OCI-LY7 (cell line): ENCODE measurements at regions of chr7 and their contacts with region 1.

Region 1: GRCh38 chr7:100691676-100692577 is 2.1 kb downstream of the GIGYF1 start:
- DNase-seq: peak; percentile 84
- H3K4me3 ChIP-seq: peak overlapping the region; percentile 95
- H3K27ac ChIP-seq: peak overlapping the region; percentile 42
- H3K4me1 ChIP-seq: peaks cover 42% of the 10 kb centered on the region
- CTCF ChIP-seq: peak; percentile 93

Region 2: DNA sequence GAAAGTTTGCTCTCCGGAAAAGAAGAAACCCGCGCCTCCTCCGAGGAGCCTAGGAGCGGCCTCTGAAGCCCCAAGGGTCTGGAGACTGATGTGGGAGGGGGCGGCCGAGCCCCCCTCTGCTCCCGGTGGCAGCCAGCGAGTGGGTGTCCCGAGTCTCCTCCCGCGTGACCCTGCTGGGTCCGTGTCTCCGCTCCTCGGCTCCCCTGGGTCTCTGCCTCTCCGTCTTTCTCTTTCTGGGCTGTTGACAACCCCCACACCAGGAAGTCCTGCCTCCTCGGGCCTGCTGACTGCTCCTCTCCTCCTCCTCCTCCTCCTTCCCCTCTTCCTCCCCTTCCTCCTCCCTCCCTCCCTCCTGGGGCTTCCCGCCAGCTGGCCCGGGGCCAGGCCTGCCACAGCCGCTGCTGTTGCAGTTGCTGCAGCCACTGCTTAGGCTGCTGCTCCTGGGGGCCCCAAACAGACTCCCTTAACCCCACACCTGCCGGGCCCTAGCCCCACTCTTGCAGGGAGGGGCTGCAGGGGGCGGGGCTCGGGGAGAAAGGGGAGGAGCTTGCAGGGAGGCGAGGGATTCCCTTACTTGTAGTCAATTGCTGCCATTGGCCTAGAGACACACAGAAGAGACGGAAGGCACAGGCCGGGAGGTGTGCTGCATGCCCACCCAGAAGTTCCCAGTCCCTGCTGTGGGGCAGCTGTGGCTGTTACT is 212.8 kb before region 1 on chr7 and contains the start of gene TSC22D4:
- CTCF ChIA-PET with region 1: no interaction called
- POLR2A ChIA-PET with region 1: interaction called, 4 read pairs
- intact Hi-C with region 1: loop called (anchors 5 kb)
- DNase-seq: peak; percentile 97
- H3K4me3 ChIP-seq: peak within 1 kb of the TSS; percentile 86
- H3K27ac ChIP-seq: peak within 1 kb of the TSS; percentile 75
- H3K4me1 ChIP-seq: peaks cover 40% of the 10 kb centered on the region
- CTCF ChIP-seq: no peak
- total RNA-seq, gene TSC22D4: 38.5 and 41.4 TPM in 2 replicates

Region 3: DNA sequence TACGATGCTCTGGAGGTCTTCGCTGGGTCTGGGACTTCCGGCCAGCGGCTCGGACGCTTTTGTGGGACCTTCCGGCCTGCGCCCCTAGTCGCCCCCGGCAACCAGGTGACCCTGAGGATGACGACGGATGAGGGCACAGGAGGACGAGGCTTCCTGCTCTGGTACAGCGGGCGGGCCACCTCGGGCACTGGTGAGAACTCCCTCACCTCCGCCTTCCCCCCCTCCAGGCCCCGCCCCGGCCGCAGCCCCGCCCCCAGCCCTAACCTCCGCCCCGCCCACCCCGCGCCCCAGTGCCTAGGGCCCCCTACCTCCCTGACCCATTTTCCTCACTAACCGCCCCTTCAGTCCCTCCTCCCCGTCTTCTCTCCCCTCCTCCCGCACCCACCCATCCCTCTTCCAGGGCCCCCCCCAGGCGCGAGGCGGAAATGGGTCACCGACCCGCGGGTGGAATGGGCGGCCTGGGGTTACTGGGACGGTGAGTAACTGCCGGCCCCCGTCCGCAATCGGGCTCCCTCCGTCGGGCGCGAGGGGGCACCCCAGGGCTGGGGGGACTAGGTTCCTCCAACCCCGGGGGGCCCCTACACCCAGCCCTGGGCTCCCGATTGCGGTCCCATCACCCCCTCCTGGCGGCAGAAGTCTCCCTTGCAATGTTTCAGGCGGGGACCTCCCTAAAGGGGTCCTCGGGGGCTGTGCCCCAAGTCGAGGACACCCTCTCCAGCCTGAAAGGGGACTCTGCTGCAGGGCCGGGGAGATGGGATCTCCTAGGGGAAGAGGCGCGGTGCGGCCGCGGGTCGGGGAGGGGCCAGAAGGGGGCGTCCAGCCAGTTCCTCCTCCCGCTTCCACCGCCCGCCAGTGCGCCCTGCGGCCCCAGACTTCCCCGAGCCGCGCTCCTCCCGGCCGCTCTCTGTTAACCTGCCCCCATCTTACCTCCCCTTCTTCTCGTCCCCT is 87.6 kb before region 1 on chr7:
- CTCF ChIA-PET with region 1: no interaction called
- POLR2A ChIA-PET with region 1: interaction called, 7 read pairs
- intact Hi-C with region 1: loop called (anchors 1 kb)
- DNase-seq: peak; percentile 85
- H3K4me3 ChIP-seq: peak overlapping the region; percentile 76
- H3K27ac ChIP-seq: peak overlapping the region; percentile 39
- H3K4me1 ChIP-seq: peaks cover 13% of the 10 kb centered on the region
- CTCF ChIP-seq: peak; percentile 81

Region 4: DNA sequence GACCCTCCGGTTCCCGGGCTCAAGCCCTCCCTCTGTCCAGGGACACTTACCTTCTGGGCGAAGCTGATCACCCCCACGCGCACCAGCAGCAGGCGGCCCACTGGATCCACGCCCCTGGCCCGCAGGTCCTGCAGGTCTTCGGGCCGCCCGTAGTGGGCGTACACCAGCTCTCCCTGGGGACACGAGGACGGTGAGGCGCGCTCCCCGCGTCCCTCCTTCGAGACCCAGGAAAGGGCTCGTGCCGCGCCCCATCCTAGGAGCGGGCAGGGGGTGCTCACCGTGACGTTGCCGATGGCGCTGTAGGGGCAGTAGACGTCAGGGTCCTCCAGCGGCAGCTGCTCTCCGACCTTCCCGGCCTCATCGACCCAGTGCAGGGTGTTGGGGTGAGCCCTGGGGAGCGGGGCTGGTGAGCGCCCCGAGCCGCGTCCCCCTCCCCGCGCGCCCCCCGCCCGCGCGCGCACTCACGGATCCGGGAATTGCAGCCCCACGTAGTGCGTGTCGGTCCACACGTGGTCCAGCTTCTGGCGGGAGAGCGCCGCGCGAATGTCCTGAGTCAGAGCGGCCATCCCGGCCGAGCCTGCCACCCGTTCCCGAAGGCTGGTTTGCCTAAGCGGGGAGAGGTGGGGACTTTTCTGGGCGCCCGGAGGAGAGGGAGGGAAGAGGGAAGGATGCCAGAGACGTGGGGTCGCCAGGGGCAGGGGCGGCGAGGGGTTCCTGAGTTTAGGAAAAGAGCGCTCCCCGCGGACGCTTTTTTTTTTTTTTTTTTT is 58.8 kb before region 1 on chr7:
- CTCF ChIA-PET with region 1: interaction called, 5 read pairs
- POLR2A ChIA-PET with region 1: interaction called, 4 read pairs
- intact Hi-C with region 1: loop called (anchors 1 kb)
- DNase-seq: peak; percentile 84
- H3K4me3 ChIP-seq: peak overlapping the region; percentile 73
- H3K27ac ChIP-seq: peak overlapping the region; percentile 44
- H3K4me1 ChIP-seq: peaks cover 7% of the 10 kb centered on the region
- CTCF ChIP-seq: peak; percentile 64

Region 5: GRCh38 chr7:100705753-100706671 is 14.1 kb after region 1 on chr7 and contains the start of gene POP7:
- CTCF ChIA-PET with region 1: interaction called, 13 read pairs
- POLR2A ChIA-PET with region 1: interaction called, 28 read pairs
- intact Hi-C with region 1: no loop called
- DNase-seq: peak; percentile 99
- H3K4me3 ChIP-seq: peak within 1 kb of the TSS; percentile 99
- H3K27ac ChIP-seq: peak within 1 kb of the TSS; percentile 88
- H3K4me1 ChIP-seq: peaks cover 18% of the 10 kb centered on the region
- CTCF ChIP-seq: no peak
- total RNA-seq, gene POP7: 82.6 and 94.3 TPM in 2 replicates

Region 6: GRCh38 chr7:100933735-100934134 is 241.8 kb after region 1 on chr7:
- CTCF ChIA-PET with region 1: no interaction called
- POLR2A ChIA-PET with region 1: no interaction called
- intact Hi-C with region 1: no loop called
- DNase-seq: no peak
- H3K4me3 ChIP-seq: no peak overlapping the region
- H3K27ac ChIP-seq: no peak overlapping the region
- H3K4me1 ChIP-seq: no peaks in the 10 kb centered on the region
- CTCF ChIP-seq: no peak